B cell (primary cell): ENCODE measurements at regions of chr15 and their contacts with region 1.

Region 1: GRCh38 chr15:52568601-52569256 is at the start of gene ARPP19:
- DNase-seq: peak; percentile 93
- ATAC-seq: peak; percentile 84
- H3K4me3 ChIP-seq: peak within 1 kb of the TSS; percentile 61 to 83 (median 75)
- H3K4me3 Mint-ChIP-seq: peak within 1 kb of the TSS; percentile 98
- H3K27ac ChIP-seq: peak within 1 kb of the TSS; percentile 93 to 99
- H3K27ac Mint-ChIP-seq: peak within 1 kb of the TSS; percentile 98
- H3K4me1 ChIP-seq: peaks cover 33 to 35% of the 10 kb centered on the region in 2 donors
- H3K4me1 Mint-ChIP-seq: peaks cover 42% of the 10 kb centered on the region
- H3K27me3 ChIP-seq: no peaks in the 10 kb centered on the region
- H3K27me3 Mint-ChIP-seq: no peaks in the 10 kb centered on the region
- CTCF ChIP-seq: no peak
- total RNA-seq, gene ARPP19: 147 and 152 TPM in 2 replicates

Region 2: GRCh38 chr15:51814606-51815005 is 754.1 kb before region 1 on chr15:
- CTCF ChIA-PET with region 1: no interaction called
- POLR2A ChIA-PET with region 1: no interaction called
- intact Hi-C with region 1: no loop called
- DNase-seq: no peak
- ATAC-seq: no peak
- H3K4me3 ChIP-seq: no peak overlapping the region
- H3K4me3 Mint-ChIP-seq: no peak overlapping the region
- H3K27ac ChIP-seq: no peak overlapping the region
- H3K27ac Mint-ChIP-seq: no peak overlapping the region
- H3K4me1 ChIP-seq: no peaks in the 10 kb centered on the region
- H3K4me1 Mint-ChIP-seq: no peaks in the 10 kb centered on the region
- H3K27me3 ChIP-seq: no peaks in the 10 kb centered on the region
- H3K27me3 Mint-ChIP-seq: no peaks in the 10 kb centered on the region
- CTCF ChIP-seq: no peak

Region 3: DNA sequence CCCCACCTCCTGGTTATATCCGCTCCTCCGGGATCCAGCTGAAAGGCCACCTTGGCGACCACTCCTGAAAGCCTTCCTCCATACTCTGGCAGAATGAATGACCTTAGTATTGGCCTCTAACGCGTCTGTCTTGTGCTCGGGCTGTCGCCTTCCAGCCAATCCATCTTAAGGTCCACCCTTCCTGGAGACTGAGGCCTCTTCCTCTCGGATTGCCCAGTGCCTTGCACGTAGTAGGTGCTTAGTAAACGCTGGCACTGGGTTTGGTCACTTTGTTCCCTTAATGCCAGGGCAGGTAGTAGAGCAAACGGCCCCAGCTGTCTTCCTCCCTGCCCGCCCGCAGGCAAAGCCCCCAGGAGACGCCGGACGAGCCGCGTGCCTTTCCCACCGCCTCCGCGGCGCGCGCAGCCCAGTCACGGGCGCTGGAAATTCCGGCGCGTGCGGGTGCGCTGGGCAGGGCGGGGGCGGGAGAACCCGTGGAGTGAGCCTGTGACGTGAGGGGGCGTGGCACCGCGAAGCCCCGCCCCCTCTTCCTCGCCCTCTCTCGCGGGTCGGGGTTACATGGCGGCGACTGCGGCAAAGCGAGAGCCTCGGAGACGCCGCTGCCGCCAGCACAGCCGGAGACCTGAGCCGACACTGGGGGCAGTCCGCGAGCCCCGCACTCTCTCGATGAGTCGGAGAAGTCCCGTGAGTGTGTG is 549.9 kb before region 1 on chr15 and contains the start of gene MAPK6:
- CTCF ChIA-PET with region 1: no interaction called
- POLR2A ChIA-PET with region 1: no interaction called
- intact Hi-C with region 1: loop called (anchors 2 kb)
- DNase-seq: peak; percentile 98
- ATAC-seq: peak; percentile 86
- H3K4me3 ChIP-seq: peak within 1 kb of the TSS; percentile 68 to 83 (median 81)
- H3K4me3 Mint-ChIP-seq: peak within 1 kb of the TSS; percentile 98
- H3K27ac ChIP-seq: peak within 1 kb of the TSS; percentile 83 to 86
- H3K27ac Mint-ChIP-seq: peak within 1 kb of the TSS; percentile 100
- H3K4me1 ChIP-seq: peaks cover 24 to 27% of the 10 kb centered on the region in 2 donors
- H3K4me1 Mint-ChIP-seq: peaks cover 30% of the 10 kb centered on the region
- H3K27me3 ChIP-seq: no peaks in the 10 kb centered on the region
- H3K27me3 Mint-ChIP-seq: no peaks in the 10 kb centered on the region
- CTCF ChIP-seq: no peak
- total RNA-seq, gene MAPK6: 17.9 and 20.2 TPM in 2 replicates

Region 4: DNA sequence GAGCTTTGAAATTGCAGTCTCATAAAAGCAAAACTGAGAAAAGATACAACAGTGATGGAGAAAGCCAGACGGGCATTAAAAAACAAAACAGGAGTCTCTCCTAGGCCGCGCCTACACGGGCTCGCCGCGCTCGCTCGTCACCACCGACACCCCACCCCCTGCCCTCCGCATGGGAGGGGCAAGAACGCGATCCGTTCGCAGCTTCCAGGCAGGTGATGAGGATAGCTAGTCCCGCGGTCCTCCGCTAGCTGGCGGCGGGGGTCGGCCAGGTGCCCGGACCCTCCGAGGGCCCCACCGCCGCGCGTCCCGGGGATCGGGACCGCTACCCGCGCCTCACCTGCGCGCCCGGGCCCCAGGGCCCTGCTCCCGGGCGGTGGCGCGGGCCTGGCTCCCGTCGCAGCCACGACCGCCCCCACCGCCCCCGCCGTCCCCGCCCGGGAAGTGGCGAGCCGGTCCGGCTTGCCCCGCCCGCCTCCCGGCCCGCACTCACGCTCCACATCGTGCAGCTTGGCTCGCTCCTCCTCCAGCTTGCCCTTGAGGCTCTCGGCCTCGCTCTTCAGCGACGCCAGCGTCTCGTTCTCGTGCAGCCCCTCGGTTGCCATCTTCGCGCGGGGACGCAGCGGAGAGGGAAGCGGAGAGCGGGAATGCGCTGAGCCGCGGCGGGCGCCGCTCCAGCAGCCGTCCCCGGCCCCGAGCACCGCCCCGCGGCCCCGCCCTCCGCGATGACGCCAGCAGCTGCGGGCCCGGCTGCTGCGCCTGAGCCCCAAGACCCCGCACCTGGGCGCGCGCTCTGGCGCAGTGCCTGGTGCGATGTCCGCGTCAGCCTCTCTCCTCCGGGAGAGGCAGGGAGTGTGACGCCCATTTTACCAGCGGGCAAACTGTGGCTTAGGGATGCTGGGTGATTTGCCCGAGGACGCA is 389.2 kb before region 1 on chr15:
- CTCF ChIA-PET with region 1: no interaction called
- POLR2A ChIA-PET with region 1: no interaction called
- intact Hi-C with region 1: loop called (anchors 10 kb)
- DNase-seq: peak; percentile 95
- ATAC-seq: peak; percentile 78
- H3K4me3 ChIP-seq: peak overlapping the region; percentile 67 to 97 (median 87)
- H3K4me3 Mint-ChIP-seq: peak overlapping the region; percentile 93
- H3K27ac ChIP-seq: peak overlapping the region; percentile 97
- H3K27ac Mint-ChIP-seq: peak overlapping the region; percentile 99
- H3K4me1 ChIP-seq: peaks cover 33 to 48% of the 10 kb centered on the region in 2 donors
- H3K4me1 Mint-ChIP-seq: peaks cover 59% of the 10 kb centered on the region
- H3K27me3 ChIP-seq: no peaks in the 10 kb centered on the region
- H3K27me3 Mint-ChIP-seq: no peaks in the 10 kb centered on the region
- CTCF ChIP-seq: no peak

Region 5: DNA sequence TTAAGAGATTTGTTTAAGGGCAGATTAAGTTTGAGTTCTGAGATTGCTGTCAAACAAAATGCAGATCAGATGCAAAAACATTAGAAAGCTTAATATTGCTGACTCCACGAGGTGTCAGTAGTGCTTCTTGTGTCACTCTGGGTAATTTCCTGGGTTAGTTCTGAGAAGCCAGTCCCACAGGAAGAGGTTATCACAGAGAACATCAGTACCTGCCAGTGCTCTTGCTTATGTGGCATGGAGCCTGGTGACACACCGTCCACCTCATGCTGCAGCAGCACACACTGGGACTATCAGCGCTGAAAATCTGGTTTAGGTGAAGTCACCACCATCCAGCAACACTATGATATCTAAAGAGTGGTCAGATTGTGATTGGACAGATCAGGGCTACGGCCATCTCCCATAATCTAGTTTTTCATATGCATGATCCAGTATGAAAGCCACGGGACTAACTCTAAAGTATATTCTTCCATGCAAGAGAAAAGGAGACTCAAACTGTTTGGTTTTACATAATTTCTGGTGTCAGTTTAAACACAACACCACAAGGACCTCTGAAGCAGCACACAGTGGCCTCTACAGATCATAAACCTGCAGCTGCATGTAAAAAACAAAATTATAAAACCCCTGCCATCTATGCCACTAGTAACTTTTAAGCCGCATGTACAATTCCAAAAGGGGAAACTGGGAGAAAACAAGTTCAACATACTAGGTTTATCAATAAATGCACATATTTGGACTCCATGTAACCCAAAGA is 237.1 kb before region 1 on chr15:
- CTCF ChIA-PET with region 1: no interaction called
- POLR2A ChIA-PET with region 1: no interaction called
- intact Hi-C with region 1: loop called (anchors 1 kb)
- DNase-seq: peak; percentile 67
- ATAC-seq: peak; percentile 90
- H3K4me3 ChIP-seq: no peak overlapping the region
- H3K4me3 Mint-ChIP-seq: no peak overlapping the region
- H3K27ac ChIP-seq: peak overlapping the region in 1 of 2 donors; percentile 20
- H3K27ac Mint-ChIP-seq: peak overlapping the region; percentile 74
- H3K4me1 ChIP-seq: peaks cover 7 to 8% of the 10 kb centered on the region in 2 donors
- H3K4me1 Mint-ChIP-seq: peaks cover 10% of the 10 kb centered on the region
- H3K27me3 ChIP-seq: no peaks in the 10 kb centered on the region
- H3K27me3 Mint-ChIP-seq: no peaks in the 10 kb centered on the region
- CTCF ChIP-seq: peak; percentile 66

Region 6: DNA sequence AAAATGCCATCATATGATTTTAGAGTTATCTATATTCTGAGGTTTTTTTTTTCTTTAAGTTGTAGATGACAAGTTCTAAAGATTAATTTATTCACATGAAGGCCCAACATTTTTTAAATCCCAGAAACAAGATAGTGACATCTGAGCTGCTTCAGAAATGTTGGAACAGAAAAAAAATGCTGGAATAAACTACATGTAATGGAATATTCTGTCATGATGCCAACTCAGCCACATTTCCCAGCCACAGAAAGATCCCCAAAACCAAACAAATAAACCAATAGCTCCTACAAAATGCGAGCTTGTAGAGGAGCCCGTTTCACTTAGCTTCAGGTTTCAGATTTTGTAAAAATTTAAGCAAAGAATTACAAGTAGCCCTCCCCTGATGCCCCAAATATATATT is 162.1 kb before region 1 on chr15:
- CTCF ChIA-PET with region 1: no interaction called
- POLR2A ChIA-PET with region 1: interaction called, 10 read pairs
- intact Hi-C with region 1: no loop called
- DNase-seq: no peak
- ATAC-seq: no peak
- H3K4me3 ChIP-seq: no peak overlapping the region
- H3K4me3 Mint-ChIP-seq: no peak overlapping the region
- H3K27ac ChIP-seq: no peak overlapping the region
- H3K27ac Mint-ChIP-seq: no peak overlapping the region
- H3K4me1 ChIP-seq: no peaks in the 10 kb centered on the region
- H3K4me1 Mint-ChIP-seq: no peaks in the 10 kb centered on the region
- H3K27me3 ChIP-seq: no peaks in the 10 kb centered on the region
- H3K27me3 Mint-ChIP-seq: no peaks in the 10 kb centered on the region
- CTCF ChIP-seq: no peak

Region 7: GRCh38 chr15:52528991-52529926 is 39.5 kb before region 1 on chr15:
- CTCF ChIA-PET with region 1: no interaction called
- POLR2A ChIA-PET with region 1: no interaction called
- intact Hi-C with region 1: loop called (anchors 1 kb)
- DNase-seq: peak; percentile 92
- ATAC-seq: peak; percentile 79
- H3K4me3 ChIP-seq: peak overlapping the region; percentile 51 to 80 (median 71)
- H3K4me3 Mint-ChIP-seq: peak overlapping the region; percentile 81
- H3K27ac ChIP-seq: peak overlapping the region; percentile 73 to 90
- H3K27ac Mint-ChIP-seq: peak overlapping the region; percentile 92
- H3K4me1 ChIP-seq: peaks cover 11 to 18% of the 10 kb centered on the region in 2 donors
- H3K4me1 Mint-ChIP-seq: peaks cover 27% of the 10 kb centered on the region
- H3K27me3 ChIP-seq: no peaks in the 10 kb centered on the region
- H3K27me3 Mint-ChIP-seq: no peaks in the 10 kb centered on the region
- CTCF ChIP-seq: no peak

Region 8: GRCh38 chr15:52730173-52730572 is 161.4 kb after region 1 on chr15:
- CTCF ChIA-PET with region 1: interaction called, 8 read pairs
- POLR2A ChIA-PET with region 1: no interaction called
- intact Hi-C with region 1: loop called (anchors 2 kb)
- DNase-seq: peak; percentile 80
- ATAC-seq: peak; percentile 97
- H3K4me3 ChIP-seq: no peak overlapping the region
- H3K4me3 Mint-ChIP-seq: peak overlapping the region; percentile 64
- H3K27ac ChIP-seq: peak overlapping the region; percentile 46 to 60
- H3K27ac Mint-ChIP-seq: peak overlapping the region; percentile 91
- H3K4me1 ChIP-seq: peaks cover 26 to 31% of the 10 kb centered on the region in 2 donors
- H3K4me1 Mint-ChIP-seq: peaks cover 31% of the 10 kb centered on the region
- H3K27me3 ChIP-seq: no peaks in the 10 kb centered on the region
- H3K27me3 Mint-ChIP-seq: no peaks in the 10 kb centered on the region
- CTCF ChIP-seq: peak; percentile 49